A549 (cell line): ENCODE measurements at regions of chr2 and their contacts with region 1.

Region 1: GRCh38 chr2:218292048-218293014 is at the start of gene TMBIM1:
- DNase-seq: peak; percentile 69 to 84
- ATAC-seq: peak; percentile 93 to 95
- H3K4me3 ChIP-seq: peak within 1 kb of the TSS; percentile 91
- H3K27ac ChIP-seq: peak within 1 kb of the TSS; percentile 92 to 97
- H3K4me1 ChIP-seq: peaks cover 38% of the 10 kb centered on the region
- CTCF ChIP-seq: peak; percentile 95
- EP300 ChIP-seq: no peak
- POLR2A ChIP-seq: peak; percentile 56
- RAD21 ChIP-seq: peak; percentile 9 to 65; a peak in 4 of 5 replicates
- polyA plus RNA-seq, gene TMBIM1: 61.4 and 91.5 TPM in 2 replicates

Region 2: DNA sequence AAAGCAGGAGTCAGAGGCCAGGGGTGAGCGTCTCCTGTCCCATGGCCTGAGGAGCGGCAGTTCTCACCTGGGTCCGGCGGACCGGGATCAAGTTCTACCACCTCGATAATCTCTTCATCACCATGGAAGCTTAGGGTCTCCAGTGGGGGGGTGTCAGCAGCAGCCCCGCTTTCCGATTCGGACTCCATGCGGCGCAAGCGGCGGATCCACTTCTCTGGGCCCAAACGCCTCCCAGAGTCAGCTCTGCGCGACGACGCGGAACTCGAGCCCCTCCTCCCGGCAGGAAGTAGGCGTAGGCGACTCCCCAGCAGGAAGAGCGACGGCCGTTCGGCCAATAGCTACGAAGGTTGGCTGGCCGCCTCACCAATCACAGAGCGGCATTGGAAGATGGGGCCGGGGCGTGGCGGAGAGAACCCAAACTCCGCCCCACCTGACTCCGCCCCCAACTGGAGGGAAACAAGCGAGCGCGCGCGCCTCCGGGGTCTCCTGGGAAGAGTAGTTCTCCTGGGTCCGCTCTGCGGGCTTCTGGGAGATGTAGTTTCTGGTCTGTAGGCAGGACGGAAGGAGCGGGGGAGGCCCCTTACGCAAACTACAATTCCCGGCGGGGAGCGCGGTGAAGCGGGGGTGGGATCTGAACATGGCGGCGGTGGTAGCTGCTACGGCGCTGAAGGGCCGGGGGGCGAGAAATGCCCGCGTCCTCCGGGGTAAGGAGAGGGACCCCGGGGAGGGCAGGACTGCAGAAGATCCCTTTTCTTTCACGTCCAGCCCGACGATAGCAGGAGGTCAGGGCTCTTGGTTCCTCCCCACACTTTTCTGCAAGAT is 22.2 kb before region 1 on chr2 and contains the starts of genes AAMP and PNKD:
- CTCF ChIA-PET with region 1: interaction called, 105 read pairs
- POLR2A ChIA-PET with region 1: interaction called, 6 read pairs
- DNase-seq: peak; percentile 97 to 99
- ATAC-seq: peak; percentile 88 to 93
- H3K4me3 ChIP-seq: peak within 1 kb of the TSS; percentile 97
- H3K27ac ChIP-seq: peak within 1 kb of the TSS; percentile 90 to 92
- H3K4me1 ChIP-seq: peaks cover 25% of the 10 kb centered on the region
- CTCF ChIP-seq: no peak
- EP300 ChIP-seq: no peak
- POLR2A ChIP-seq: peak; percentile 75
- RAD21 ChIP-seq: no peak
- polyA plus RNA-seq, gene AAMP: 71.3 and 82.0 TPM in 2 replicates
- polyA plus RNA-seq, gene PNKD: 46.2 and 52.6 TPM in 2 replicates

Region 3: DNA sequence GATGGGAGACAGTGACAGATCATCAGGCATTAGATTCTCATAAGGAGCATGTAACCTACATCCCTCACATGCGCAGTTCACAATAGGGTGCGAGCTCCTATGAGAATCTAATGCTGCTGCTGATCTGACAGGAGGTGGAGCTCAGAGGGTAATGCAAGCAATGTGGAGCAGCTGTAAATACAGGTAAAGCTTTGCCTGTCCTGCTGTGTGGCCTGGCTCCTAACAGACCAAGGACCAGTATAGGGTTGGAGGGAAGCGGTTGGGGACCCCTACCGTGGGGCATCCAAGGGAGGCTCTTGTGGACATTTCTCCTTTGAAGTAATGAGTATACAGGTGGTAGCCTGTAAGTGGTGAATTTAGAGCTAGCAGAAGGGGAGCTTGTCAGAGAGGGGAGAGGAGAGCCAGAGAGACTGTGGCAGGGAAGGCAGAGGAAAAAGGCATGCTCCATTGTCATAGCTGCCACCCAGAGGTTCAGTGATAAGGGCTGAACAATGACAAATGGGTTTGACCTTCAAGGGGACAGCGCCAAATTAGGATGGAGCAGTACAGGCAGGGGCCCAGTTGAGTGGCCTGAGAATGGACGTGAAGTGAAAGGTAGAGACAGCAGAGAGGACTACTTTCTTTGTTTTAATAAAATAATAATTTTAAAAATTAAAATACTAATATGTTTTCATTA is 15.2 kb after region 1 on chr2:
- CTCF ChIA-PET with region 1: interaction called, 21 read pairs
- POLR2A ChIA-PET with region 1: no interaction called
- DNase-seq: no peak
- ATAC-seq: no peak
- H3K4me3 ChIP-seq: no peak overlapping the region
- H3K27ac ChIP-seq: no peak overlapping the region
- H3K4me1 ChIP-seq: peaks cover 9% of the 10 kb centered on the region; the same call in 2 of the 3 replicates
- CTCF ChIP-seq: no peak
- EP300 ChIP-seq: no peak
- POLR2A ChIP-seq: no peak
- RAD21 ChIP-seq: no peak

Region 4: GRCh38 chr2:218395797-218396687 is 103.7 kb after region 1 on chr2:
- CTCF ChIA-PET with region 1: interaction called, 14 read pairs
- POLR2A ChIA-PET with region 1: no interaction called
- DNase-seq: peak; percentile 59 to 97
- ATAC-seq: peak; percentile 50 to 75
- H3K4me3 ChIP-seq: peak overlapping the region; percentile 94
- H3K27ac ChIP-seq: peak overlapping the region; percentile 98 to 100
- H3K4me1 ChIP-seq: peaks cover 29% of the 10 kb centered on the region
- CTCF ChIP-seq: peak; percentile 89
- EP300 ChIP-seq: peak in 1 of 2 experiments; percentile 24; a peak in 1 of 5 replicates
- POLR2A ChIP-seq: no peak; the same call in none of the 2 replicates
- RAD21 ChIP-seq: peak; percentile 59 to 81

Region 5: DNA sequence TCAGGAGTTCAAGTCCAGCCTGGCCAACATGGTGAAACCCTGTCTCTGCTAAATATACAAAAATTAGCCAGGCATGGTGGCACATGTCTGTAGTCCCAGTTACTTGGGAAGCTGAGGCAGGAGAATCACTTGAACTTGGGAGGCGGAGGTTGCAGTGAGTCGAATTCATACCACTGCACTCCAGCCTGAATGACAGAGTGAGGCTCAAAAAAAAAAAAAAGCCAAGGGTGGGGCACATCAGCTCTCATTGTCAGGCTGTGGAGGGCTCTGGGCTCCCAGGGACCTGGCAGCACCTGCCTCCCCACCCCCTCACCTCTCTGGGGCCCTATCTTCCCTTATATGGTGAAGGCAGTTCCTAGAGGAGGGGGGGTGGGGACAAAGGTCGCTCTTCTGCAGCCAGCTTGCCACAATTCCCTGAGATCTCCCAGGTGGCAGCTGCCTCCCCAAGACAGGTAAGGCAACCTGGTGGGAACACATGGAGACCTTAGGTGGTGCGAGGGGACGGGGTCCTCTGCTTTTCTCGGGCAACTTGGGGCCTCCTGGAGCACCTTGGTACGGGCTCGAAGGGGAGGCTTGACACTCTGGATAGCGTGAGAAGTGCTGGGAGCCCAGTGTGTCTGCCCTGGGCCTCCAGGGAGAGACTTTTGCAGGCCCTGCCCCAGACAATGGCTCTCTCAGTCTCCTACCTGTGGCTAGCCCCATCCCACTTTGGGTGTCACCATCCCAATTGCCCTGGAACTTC is 126.6 kb after region 1 on chr2 and contains the start of gene VIL1:
- CTCF ChIA-PET with region 1: no interaction called
- POLR2A ChIA-PET with region 1: no interaction called
- DNase-seq: no peak
- ATAC-seq: peak; percentile 19 to 42; a peak in 4 of 6 replicates
- H3K4me3 ChIP-seq: no peak within 1 kb of the TSS
- H3K27ac ChIP-seq: peak within 1 kb of the TSS in 1 of 2 experiments; percentile 26; a peak in 1 of 6 replicates
- H3K4me1 ChIP-seq: peaks cover 6% of the 10 kb centered on the region
- CTCF ChIP-seq: no peak
- EP300 ChIP-seq: no peak
- POLR2A ChIP-seq: no peak
- RAD21 ChIP-seq: no peak
- polyA plus RNA-seq, gene VIL1: 2.3 and 3.7 TPM in 2 replicates

Region 6: DNA sequence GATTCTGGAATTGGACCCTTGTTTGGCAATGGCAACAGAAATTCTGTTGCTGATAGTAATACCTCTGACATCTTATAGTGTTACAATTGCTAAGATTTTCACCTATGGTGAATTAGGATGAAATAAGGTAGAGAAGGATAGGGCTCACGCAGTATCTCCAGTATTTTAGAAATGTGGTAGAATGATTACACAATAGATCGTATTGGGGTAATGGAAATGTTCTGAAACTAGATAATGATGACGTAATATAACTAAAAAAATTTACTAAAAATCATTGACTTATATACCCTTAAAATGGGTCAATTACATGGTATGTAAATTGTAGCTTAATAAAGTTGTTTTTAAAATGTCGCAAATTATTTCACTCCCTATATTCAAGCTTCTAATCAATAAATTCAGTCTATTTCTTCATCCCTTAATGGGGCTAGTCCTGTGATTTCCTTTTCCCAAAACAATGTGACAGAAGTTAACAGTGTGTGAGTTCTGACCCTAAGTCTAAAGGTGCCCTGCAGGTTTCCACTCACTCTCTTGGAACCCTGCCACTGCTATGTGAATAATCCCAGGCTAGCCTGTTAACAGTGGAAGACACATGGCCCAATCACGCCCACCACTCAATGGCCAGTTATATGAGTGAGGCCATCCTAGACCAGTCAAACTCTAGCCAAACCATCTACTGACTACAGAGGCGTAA is 244.6 kb after region 1 on chr2:
- CTCF ChIA-PET with region 1: no interaction called
- POLR2A ChIA-PET with region 1: no interaction called
- DNase-seq: no peak
- ATAC-seq: no peak
- H3K4me3 ChIP-seq: no peak overlapping the region
- H3K27ac ChIP-seq: no peak overlapping the region
- H3K4me1 ChIP-seq: no peaks in the 10 kb centered on the region
- CTCF ChIP-seq: no peak
- EP300 ChIP-seq: no peak
- POLR2A ChIP-seq: no peak
- RAD21 ChIP-seq: no peak

Region 7: GRCh38 chr2:218567797-218568189 is 275.5 kb after region 1 on chr2:
- CTCF ChIA-PET with region 1: no interaction called
- POLR2A ChIA-PET with region 1: no interaction called
- DNase-seq: peak in 1 of 2 experiments; percentile 69
- ATAC-seq: peak; percentile 86
- H3K4me3 ChIP-seq: peak overlapping the region; percentile 62
- H3K27ac ChIP-seq: peak overlapping the region; percentile 75 to 91
- H3K4me1 ChIP-seq: peaks cover 22% of the 10 kb centered on the region
- CTCF ChIP-seq: no peak
- EP300 ChIP-seq: no peak
- POLR2A ChIP-seq: no peak
- RAD21 ChIP-seq: no peak